Naive thymus-derived CD4-positive, alpha-beta T cell (primary cell): ENCODE measurements at regions of chr7 and their contacts with region 1.

Region 1: DNA sequence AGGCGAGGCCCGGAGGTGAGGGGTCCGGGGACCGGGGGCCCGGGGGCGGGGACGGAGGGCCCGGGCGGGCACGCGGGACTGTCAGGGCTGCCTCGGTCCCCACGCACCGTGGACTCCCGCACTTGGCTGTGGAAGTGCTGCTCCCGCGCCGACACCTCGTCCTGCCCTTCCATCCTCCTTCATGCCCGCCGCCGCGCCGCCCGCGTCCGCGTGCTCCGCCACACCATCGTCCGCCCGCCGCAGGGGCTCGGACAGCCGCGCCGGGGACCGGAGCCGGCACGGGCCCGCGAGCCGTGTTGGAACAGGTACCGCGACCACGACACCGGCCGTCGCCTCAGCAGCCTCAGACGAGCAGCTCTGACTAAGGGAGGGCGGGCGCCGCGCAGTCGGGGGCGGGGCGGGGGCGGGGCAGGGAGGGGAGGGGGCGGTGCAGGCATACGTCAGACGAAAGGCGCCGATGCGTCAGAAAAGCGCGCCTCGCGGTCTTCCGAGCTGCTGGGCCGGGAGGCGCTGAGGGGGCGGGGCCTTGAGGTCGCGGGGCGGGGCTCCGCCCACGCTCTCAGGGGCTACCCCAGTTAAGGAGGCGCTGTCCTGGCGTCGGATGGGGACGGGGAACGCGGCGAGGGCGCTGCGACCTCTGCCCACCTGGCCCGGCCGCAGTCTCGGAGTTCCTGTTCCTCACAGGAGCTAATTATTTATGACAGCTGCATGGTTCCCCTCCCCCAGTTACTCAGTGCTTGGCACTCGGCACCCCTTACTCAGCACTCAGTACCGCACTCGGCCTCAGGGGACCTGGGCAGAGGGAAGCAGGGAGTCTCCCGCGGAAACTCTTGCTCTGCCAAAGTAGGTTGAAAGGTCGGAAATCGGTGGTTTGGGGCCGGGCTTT is at the start of gene LMBR1:
- DNase-seq: peak; percentile 90 to 96 (median 93)
- ATAC-seq: peak; percentile 93
- H3K4me3 ChIP-seq: peak within 1 kb of the TSS; percentile 98
- H3K4me3 Mint-ChIP-seq: peak within 1 kb of the TSS; percentile 88 to 96 (median 92)
- H3K27ac ChIP-seq: peak within 1 kb of the TSS; percentile 91
- H3K27ac Mint-ChIP-seq: peak within 1 kb of the TSS; percentile 75 to 95 (median 92)
- H3K4me1 ChIP-seq: peaks cover 7 to 11% of the 10 kb centered on the region in 2 donors
- H3K4me1 Mint-ChIP-seq: peaks cover 19 to 52% (median 45%) of the 10 kb centered on the region in 7 donors
- H3K27me3 ChIP-seq: no peaks in the 10 kb centered on the region
- H3K27me3 Mint-ChIP-seq: no peaks in the 10 kb centered on the region
- total RNA-seq, gene LMBR1: 56.0 to 101 (median 69.0) TPM

Region 2: GRCh38 chr7:155205368-155206317 is 1687.4 kb before region 1 on chr7:
- CTCF ChIA-PET with region 1: no interaction called
- POLR2A ChIA-PET with region 1: no interaction called
- intact Hi-C with region 1: loop called in 1 of 2 experiments (anchors 10 kb)
- DNase-seq: peak; percentile 68 to 90 (median 79)
- ATAC-seq: peak; percentile 90
- H3K4me3 ChIP-seq: peak overlapping the region; percentile 52
- H3K4me3 Mint-ChIP-seq: peak overlapping the region; percentile 70 to 94 (median 86)
- H3K27ac ChIP-seq: peak overlapping the region; percentile 8
- H3K27ac Mint-ChIP-seq: peak overlapping the region; percentile 56 to 99 (median 86)
- H3K4me1 ChIP-seq: peaks cover 8 to 11% of the 10 kb centered on the region in 2 donors
- H3K4me1 Mint-ChIP-seq: peaks cover 19 to 30% (median 21%) of the 10 kb centered on the region in 7 donors
- H3K27me3 ChIP-seq: no peaks in the 10 kb centered on the region
- H3K27me3 Mint-ChIP-seq: no peaks in the 10 kb centered on the region

Region 3: GRCh38 chr7:156827587-156828203 is 65.4 kb before region 1 on chr7:
- CTCF ChIA-PET with region 1: no interaction called
- POLR2A ChIA-PET with region 1: no interaction called
- intact Hi-C with region 1: loop called in 1 of 2 experiments (anchors 5 kb)
- DNase-seq: peak in 1 of 9 donors; percentile 14
- ATAC-seq: no peak
- H3K4me3 ChIP-seq: no peak overlapping the region
- H3K4me3 Mint-ChIP-seq: no peak overlapping the region
- H3K27ac ChIP-seq: no peak overlapping the region
- H3K27ac Mint-ChIP-seq: peak overlapping the region in 2 of 9 donors; percentile 75 to 86
- H3K4me1 ChIP-seq: no peaks in the 10 kb centered on the region
- H3K4me1 Mint-ChIP-seq: peaks cover 0 to 6% (median 0%) of the 10 kb centered on the region in 7 donors
- H3K27me3 ChIP-seq: no peaks in the 10 kb centered on the region
- H3K27me3 Mint-ChIP-seq: no peaks in the 10 kb centered on the region

Region 4: GRCh38 chr7:156927571-156928405 is 34.7 kb after region 1 on chr7:
- CTCF ChIA-PET with region 1: no interaction called
- POLR2A ChIA-PET with region 1: no interaction called
- intact Hi-C with region 1: loop called in 1 of 2 experiments (anchors 1 kb)
- DNase-seq: no peak
- ATAC-seq: no peak
- H3K4me3 ChIP-seq: no peak overlapping the region
- H3K4me3 Mint-ChIP-seq: no peak overlapping the region
- H3K27ac ChIP-seq: no peak overlapping the region
- H3K27ac Mint-ChIP-seq: no peak overlapping the region
- H3K4me1 ChIP-seq: peaks cover 1 to 8% of the 10 kb centered on the region in 2 donors
- H3K4me1 Mint-ChIP-seq: peaks cover 11 to 58% (median 19%) of the 10 kb centered on the region in 7 donors
- H3K27me3 ChIP-seq: no peaks in the 10 kb centered on the region
- H3K27me3 Mint-ChIP-seq: peaks cover 0 to 64% (median 0%) of the 10 kb centered on the region in 5 donors

Region 5: DNA sequence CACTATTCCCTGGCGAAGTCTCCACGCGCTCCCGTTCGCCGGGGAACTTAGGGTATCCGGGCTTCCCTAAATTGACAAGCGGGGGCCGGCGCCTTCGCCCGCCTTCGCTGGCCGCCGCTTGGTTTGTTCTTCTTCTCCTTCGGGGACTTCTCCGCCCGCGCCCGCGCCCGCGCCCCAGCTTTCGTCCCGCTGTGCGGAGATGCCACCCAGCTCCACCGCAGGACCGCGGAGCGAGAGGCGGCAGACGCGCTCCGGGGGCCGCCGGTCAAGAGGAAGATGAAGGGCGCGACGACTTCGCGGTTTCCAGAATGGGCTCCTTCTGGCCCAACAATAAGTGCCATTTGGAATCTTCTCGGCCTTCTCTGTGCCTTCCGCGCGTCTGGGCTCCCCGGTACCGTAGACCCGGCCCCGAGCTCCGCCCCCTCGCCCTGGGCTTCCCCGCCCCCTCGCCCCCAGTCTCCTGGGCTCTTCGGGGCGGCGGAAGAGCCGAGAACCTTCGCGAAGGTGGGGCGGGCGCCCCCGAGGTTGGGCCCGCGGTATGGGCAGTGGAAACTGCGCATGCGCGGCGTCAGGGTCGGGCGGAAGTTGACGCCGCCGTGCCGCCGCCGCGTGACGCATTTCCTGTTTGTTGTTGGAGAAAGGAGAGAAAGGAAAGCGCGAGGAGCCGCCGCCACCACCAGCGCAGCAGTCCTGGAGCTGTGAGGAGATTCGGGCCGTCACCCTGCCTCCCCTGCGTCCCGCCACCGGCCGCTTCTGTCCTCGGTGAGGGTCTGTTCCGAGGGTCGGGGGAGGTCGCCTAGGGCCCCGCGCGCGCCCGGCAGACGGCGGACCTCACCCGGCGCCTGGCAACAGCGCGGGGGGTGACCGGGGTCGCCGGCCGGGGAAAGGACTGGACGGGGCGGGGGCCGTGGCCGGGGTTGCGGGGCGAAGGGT is 443.6 kb after region 1 on chr7 and contains the start of gene DNAJB6:
- CTCF ChIA-PET with region 1: no interaction called
- POLR2A ChIA-PET with region 1: no interaction called
- intact Hi-C with region 1: loop called (anchors 1 to 5 kb)
- DNase-seq: peak; percentile 93 to 98 (median 97)
- ATAC-seq: peak; percentile 91
- H3K4me3 ChIP-seq: peak within 1 kb of the TSS; percentile 91
- H3K4me3 Mint-ChIP-seq: peak within 1 kb of the TSS; percentile 94 to 99 (median 97)
- H3K27ac ChIP-seq: peak within 1 kb of the TSS; percentile 83
- H3K27ac Mint-ChIP-seq: peak within 1 kb of the TSS; percentile 96 to 99 (median 98)
- H3K4me1 ChIP-seq: peaks cover 24 to 27% of the 10 kb centered on the region in 2 donors
- H3K4me1 Mint-ChIP-seq: peaks cover 26 to 45% (median 38%) of the 10 kb centered on the region in 7 donors
- H3K27me3 ChIP-seq: no peaks in the 10 kb centered on the region
- H3K27me3 Mint-ChIP-seq: peaks cover 0 to 26% (median 4%) of the 10 kb centered on the region in 5 donors
- total RNA-seq, gene DNAJB6: 79.8 to 219 (median 96.0) TPM

Region 6: GRCh38 chr7:158856883-158857668 is 1964.0 kb after region 1 on chr7:
- CTCF ChIA-PET with region 1: no interaction called
- POLR2A ChIA-PET with region 1: no interaction called
- intact Hi-C with region 1: loop called in 1 of 2 experiments (anchors 5 kb)
- DNase-seq: peak in 2 of 9 donors; percentile 15 to 17
- ATAC-seq: no peak
- H3K4me3 ChIP-seq: peak overlapping the region; percentile 77
- H3K4me3 Mint-ChIP-seq: peak overlapping the region; percentile 67 to 98 (median 94)
- H3K27ac ChIP-seq: peak overlapping the region; percentile 83
- H3K27ac Mint-ChIP-seq: peak overlapping the region in 8 of 9 donors; percentile 24 to 92 (median 84)
- H3K4me1 ChIP-seq: peaks cover 0 to 22% of the 10 kb centered on the region in 2 donors
- H3K4me1 Mint-ChIP-seq: peaks cover 15 to 46% (median 39%) of the 10 kb centered on the region in 7 donors
- H3K27me3 ChIP-seq: no peaks in the 10 kb centered on the region
- H3K27me3 Mint-ChIP-seq: peaks cover 0 to 4% (median 0%) of the 10 kb centered on the region in 5 donors